ENCODE measurements at regions of chr1 and their contacts with region 1.

Region 1: GRCh38 chr1:27154991-27155781 is at the start of gene SLC9A1:
- DNase-seq: peak; percentile 97
- ATAC-seq: peak; percentile 95
- H3K4me3 ChIP-seq: peak within 1 kb of the TSS; percentile 62 to 87 (median 78)
- H3K4me3 Mint-ChIP-seq: peak within 1 kb of the TSS; percentile 89
- H3K27ac ChIP-seq: peak within 1 kb of the TSS; percentile 99
- H3K27ac Mint-ChIP-seq: peak within 1 kb of the TSS; percentile 98
- H3K4me1 ChIP-seq: peaks cover 25 to 45% of the 10 kb centered on the region in 2 donors
- H3K4me1 Mint-ChIP-seq: peaks cover 48% of the 10 kb centered on the region
- H3K27me3 ChIP-seq: no peaks in the 10 kb centered on the region
- H3K27me3 Mint-ChIP-seq: no peaks in the 10 kb centered on the region
- CTCF ChIP-seq: peak; percentile 81
- total RNA-seq, gene SLC9A1: 18.3 and 22.5 TPM in 2 replicates

Region 2: GRCh38 chr1:26998429-26999300 is 156.5 kb before region 1 on chr1:
- CTCF ChIA-PET with region 1: no interaction called
- POLR2A ChIA-PET with region 1: no interaction called
- intact Hi-C with region 1: loop called (anchors 1 kb)
- DNase-seq: peak; percentile 13
- ATAC-seq: no peak
- H3K4me3 ChIP-seq: no peak overlapping the region
- H3K4me3 Mint-ChIP-seq: no peak overlapping the region
- H3K27ac ChIP-seq: no peak overlapping the region
- H3K27ac Mint-ChIP-seq: no peak overlapping the region
- H3K4me1 ChIP-seq: peaks cover 28 to 40% of the 10 kb centered on the region in 2 donors
- H3K4me1 Mint-ChIP-seq: peaks cover 30% of the 10 kb centered on the region
- H3K27me3 ChIP-seq: peaks cover 0 to 31% (median 21%) of the 10 kb centered on the region in 4 experiments
- H3K27me3 Mint-ChIP-seq: peaks cover 22% of the 10 kb centered on the region
- CTCF ChIP-seq: no peak

Region 3: GRCh38 chr1:27111626-27112573 is 43.3 kb before region 1 on chr1:
- CTCF ChIA-PET with region 1: interaction called, 17 read pairs
- POLR2A ChIA-PET with region 1: interaction called, 7 read pairs
- intact Hi-C with region 1: loop called (anchors 2 kb)
- DNase-seq: peak; percentile 74
- ATAC-seq: peak; percentile 98
- H3K4me3 ChIP-seq: no peak overlapping the region
- H3K4me3 Mint-ChIP-seq: no peak overlapping the region
- H3K27ac ChIP-seq: peak overlapping the region; percentile 4 to 65
- H3K27ac Mint-ChIP-seq: peak overlapping the region; percentile 85
- H3K4me1 ChIP-seq: peaks cover 13 to 26% of the 10 kb centered on the region in 2 donors
- H3K4me1 Mint-ChIP-seq: peaks cover 27% of the 10 kb centered on the region
- H3K27me3 ChIP-seq: no peaks in the 10 kb centered on the region
- H3K27me3 Mint-ChIP-seq: no peaks in the 10 kb centered on the region
- CTCF ChIP-seq: peak; percentile 26

Region 4: DNA sequence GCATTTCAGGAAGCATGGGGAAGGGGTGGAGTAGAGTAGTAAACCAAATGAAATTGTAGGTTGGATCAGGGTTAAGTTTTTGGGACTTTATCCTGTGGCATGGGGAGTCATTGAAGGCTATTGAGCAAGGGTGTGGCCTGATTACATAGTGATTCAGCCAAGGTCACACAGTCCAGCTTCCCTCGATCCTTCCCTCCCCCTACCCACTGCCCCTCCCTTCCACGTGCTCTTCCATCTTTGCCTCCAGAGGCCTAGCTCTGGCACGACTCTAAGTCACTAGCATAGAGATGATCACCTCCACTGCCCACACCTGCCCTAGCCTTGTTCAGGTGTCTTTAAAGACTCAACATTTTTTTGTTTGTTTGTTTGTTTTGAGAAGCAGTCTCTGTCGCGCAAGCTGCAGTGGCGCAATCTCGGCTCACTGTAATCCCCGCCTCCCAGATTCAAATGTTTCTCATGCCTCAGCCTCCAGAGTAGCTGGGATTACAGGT is 36.9 kb after region 1 on chr1:
- CTCF ChIA-PET with region 1: interaction called, 15 read pairs
- POLR2A ChIA-PET with region 1: interaction called, 5 read pairs
- intact Hi-C with region 1: no loop called
- DNase-seq: no peak
- ATAC-seq: no peak
- H3K4me3 ChIP-seq: no peak overlapping the region
- H3K4me3 Mint-ChIP-seq: no peak overlapping the region
- H3K27ac ChIP-seq: no peak overlapping the region
- H3K27ac Mint-ChIP-seq: no peak overlapping the region
- H3K4me1 ChIP-seq: no peaks in the 10 kb centered on the region
- H3K4me1 Mint-ChIP-seq: no peaks in the 10 kb centered on the region
- H3K27me3 ChIP-seq: no peaks in the 10 kb centered on the region
- H3K27me3 Mint-ChIP-seq: no peaks in the 10 kb centered on the region
- CTCF ChIP-seq: no peak

Region 5: GRCh38 chr1:27284425-27285273 is 129.5 kb after region 1 on chr1:
- CTCF ChIA-PET with region 1: interaction called, 12 read pairs
- POLR2A ChIA-PET with region 1: interaction called, 3 read pairs
- intact Hi-C with region 1: no loop called
- DNase-seq: peak; percentile 88
- ATAC-seq: peak; percentile 93
- H3K4me3 ChIP-seq: no peak overlapping the region
- H3K4me3 Mint-ChIP-seq: no peak overlapping the region
- H3K27ac ChIP-seq: peak overlapping the region in 1 of 2 donors; percentile 47
- H3K27ac Mint-ChIP-seq: no peak overlapping the region
- H3K4me1 ChIP-seq: peaks cover 0 to 9% of the 10 kb centered on the region in 2 donors
- H3K4me1 Mint-ChIP-seq: peaks cover 12% of the 10 kb centered on the region
- H3K27me3 ChIP-seq: no peaks in the 10 kb centered on the region
- H3K27me3 Mint-ChIP-seq: no peaks in the 10 kb centered on the region
- CTCF ChIP-seq: peak; percentile 87

Measured in B cell (primary cell).